Activated CD4-positive, alpha-beta memory T cell treated with anti-CD3 and anti-CD28 coated beads for 36 hours (primary cell): ENCODE measurements at regions of chr12 and their contacts with region 1.

Region 1: GRCh38 chr12:47812797-47813510 is 6.7 kb downstream of the HDAC7 start:
- DNase-seq: peak; percentile 98
- H3K4me3 Mint-ChIP-seq: peak overlapping the region; percentile 92
- H3K27ac Mint-ChIP-seq: peak overlapping the region; percentile 99
- H3K4me1 Mint-ChIP-seq: peaks cover 82% of the 10 kb centered on the region
- H3K27me3 Mint-ChIP-seq: no peaks in the 10 kb centered on the region

Region 2: GRCh38 chr12:47216150-47216677 is 596.7 kb before region 1 on chr12:
- CTCF ChIA-PET with region 1: no interaction called
- POLR2A ChIA-PET with region 1: no interaction called
- intact Hi-C with region 1: loop called (anchors 5 kb)
- DNase-seq: peak; percentile 87
- H3K4me3 Mint-ChIP-seq: peak overlapping the region; percentile 85
- H3K27ac Mint-ChIP-seq: peak overlapping the region; percentile 96
- H3K4me1 Mint-ChIP-seq: peaks cover 19% of the 10 kb centered on the region
- H3K27me3 Mint-ChIP-seq: no peaks in the 10 kb centered on the region

Region 3: DNA sequence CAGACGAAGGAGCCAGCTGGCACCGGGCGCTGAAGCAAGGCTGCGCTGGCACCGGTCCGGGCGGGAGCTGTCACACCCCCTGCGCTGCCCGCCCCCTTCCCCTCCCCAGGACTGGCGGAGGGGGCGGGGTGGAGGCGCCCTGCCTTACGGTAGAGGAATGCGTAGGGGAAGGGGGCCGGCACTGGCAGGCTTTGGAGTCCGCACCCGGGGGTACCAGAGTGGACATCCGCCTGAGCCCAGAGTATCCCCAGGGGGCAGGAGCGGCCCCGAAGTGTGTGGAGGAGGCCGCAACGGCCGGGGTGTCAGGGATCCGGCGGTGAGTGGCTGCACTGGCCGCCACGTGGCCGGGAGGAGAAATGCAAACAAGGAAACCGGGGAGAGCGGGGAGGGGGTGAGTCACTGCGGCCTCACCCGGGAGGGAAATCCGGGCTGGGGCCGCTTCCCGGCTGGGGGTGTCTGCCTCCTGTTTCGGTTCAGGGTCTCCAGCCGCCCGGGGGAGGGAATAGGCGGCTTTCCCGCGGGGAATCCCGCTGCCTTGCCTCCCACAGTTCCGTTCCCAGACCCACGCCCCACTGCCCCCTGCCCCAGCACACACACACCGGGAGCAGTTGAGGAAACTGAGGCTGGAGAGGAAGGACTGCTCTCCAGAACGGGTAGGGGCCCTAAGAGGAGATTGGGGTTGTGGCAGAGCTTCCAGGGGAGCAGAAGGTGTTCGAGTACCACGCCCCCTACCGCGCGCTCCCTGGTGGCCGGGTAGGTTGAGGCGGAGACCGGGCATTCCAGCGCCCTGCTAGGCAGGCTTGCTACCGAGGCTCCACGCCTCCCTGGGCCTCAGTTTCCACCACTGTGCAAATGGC is 53.9 kb before region 1 on chr12 and contains the start of gene RAPGEF3:
- CTCF ChIA-PET with region 1: interaction called, 7 read pairs
- POLR2A ChIA-PET with region 1: interaction called, 13 read pairs
- intact Hi-C with region 1: no loop called
- DNase-seq: peak; percentile 86
- H3K4me3 Mint-ChIP-seq: peak within 1 kb of the TSS; percentile 68
- H3K27ac Mint-ChIP-seq: no peak within 1 kb of the TSS
- H3K4me1 Mint-ChIP-seq: peaks cover 46% of the 10 kb centered on the region
- H3K27me3 Mint-ChIP-seq: no peaks in the 10 kb centered on the region
- total RNA-seq, gene RAPGEF3: 2.1 to 2.5 TPM

Region 4: DNA sequence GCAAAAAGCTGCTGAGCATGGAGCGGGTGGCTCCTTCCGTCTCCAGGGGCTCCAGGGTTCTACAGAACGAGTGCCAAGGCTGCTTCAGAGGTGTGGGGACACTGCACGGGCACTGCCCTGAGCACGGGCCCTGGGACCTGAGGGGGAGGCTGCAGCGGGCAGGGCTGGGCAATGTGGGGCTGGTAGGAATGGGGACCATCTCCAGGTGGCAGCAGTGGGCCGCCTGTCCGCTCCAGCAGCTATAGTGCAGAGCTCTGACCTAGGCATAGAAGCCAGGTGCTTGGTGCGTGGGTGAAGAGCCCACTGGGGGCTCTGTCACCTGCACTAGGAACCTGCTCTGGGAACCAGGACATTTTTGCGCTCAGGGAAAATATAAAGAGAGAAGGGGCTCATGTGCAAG is 15.5 kb before region 1 on chr12:
- CTCF ChIA-PET with region 1: interaction called, 17 read pairs
- POLR2A ChIA-PET with region 1: interaction called, 5 read pairs
- intact Hi-C with region 1: no loop called
- DNase-seq: peak; percentile 47
- H3K4me3 Mint-ChIP-seq: no peak overlapping the region
- H3K27ac Mint-ChIP-seq: no peak overlapping the region
- H3K4me1 Mint-ChIP-seq: peaks cover 17% of the 10 kb centered on the region
- H3K27me3 Mint-ChIP-seq: no peaks in the 10 kb centered on the region

Region 5: GRCh38 chr12:47852096-47852571 is 39.2 kb after region 1 on chr12:
- CTCF ChIA-PET with region 1: no interaction called
- POLR2A ChIA-PET with region 1: no interaction called
- intact Hi-C with region 1: no loop called
- DNase-seq: no peak
- H3K4me3 Mint-ChIP-seq: no peak overlapping the region
- H3K27ac Mint-ChIP-seq: peak overlapping the region; percentile 40
- H3K4me1 Mint-ChIP-seq: peaks cover 14% of the 10 kb centered on the region
- H3K27me3 Mint-ChIP-seq: no peaks in the 10 kb centered on the region

Region 6: GRCh38 chr12:47882781-47883546 is 70.0 kb after region 1 on chr12:
- CTCF ChIA-PET with region 1: interaction called, 11 read pairs
- POLR2A ChIA-PET with region 1: interaction called, 29 read pairs
- intact Hi-C with region 1: loop called (anchors 1 kb)
- DNase-seq: peak; percentile 67
- H3K4me3 Mint-ChIP-seq: peak overlapping the region; percentile 89
- H3K27ac Mint-ChIP-seq: peak overlapping the region; percentile 97
- H3K4me1 Mint-ChIP-seq: peaks cover 88% of the 10 kb centered on the region
- H3K27me3 Mint-ChIP-seq: no peaks in the 10 kb centered on the region